Natural killer cell (primary cell): ENCODE measurements at regions of chr1 and their contacts with region 1.

Region 1: DNA sequence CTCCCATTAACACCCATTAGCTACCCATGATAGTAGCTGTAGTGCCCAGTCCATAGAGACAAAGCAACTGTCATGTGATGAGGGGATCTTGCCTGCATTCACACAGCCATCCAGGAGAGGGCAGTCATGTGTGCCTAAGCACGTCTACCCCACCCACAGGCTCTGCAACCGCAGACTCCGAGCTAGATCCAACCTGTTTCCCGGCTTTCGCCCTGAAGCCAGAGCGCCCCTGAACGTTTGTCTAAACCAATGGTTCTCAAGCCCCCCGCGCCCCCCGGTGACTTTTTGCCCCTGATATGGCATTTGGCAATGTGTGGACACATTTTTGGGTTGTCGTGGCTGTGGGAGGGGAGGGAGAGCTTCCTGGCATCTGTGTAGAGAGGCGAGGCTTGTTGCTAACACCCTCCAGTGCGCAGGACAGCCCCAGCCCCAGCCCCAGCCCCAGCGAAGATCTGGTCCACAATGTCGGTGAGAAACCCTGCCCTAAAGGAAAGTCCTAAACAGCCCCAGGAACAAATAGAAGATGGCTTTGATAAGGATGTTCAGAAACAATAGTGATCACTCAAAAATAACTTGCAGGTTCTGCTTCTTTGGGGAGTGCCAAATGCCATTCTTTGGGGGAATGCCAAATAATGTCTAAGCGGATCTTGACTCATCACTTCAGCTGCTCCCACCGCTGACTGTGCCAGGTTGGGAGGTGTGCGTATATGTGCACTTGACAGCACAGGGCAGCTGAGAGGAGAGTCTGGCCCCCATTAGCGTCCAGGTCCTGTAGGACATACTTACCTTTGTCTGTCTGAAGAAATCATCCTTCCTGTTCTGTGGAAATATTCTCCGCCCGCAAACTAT is 34.5 kb downstream of the SLC44A3 start:
- DNase-seq: peak; percentile 53 to 90
- ATAC-seq: peak; percentile 96 to 98 (median 98)
- H3K4me3 ChIP-seq: peak overlapping the region; percentile 41
- H3K4me3 Mint-ChIP-seq: no peak overlapping the region
- H3K27ac ChIP-seq: no peak overlapping the region
- H3K27ac Mint-ChIP-seq: no peak overlapping the region
- H3K4me1 ChIP-seq: peaks cover 6% of the 10 kb centered on the region
- H3K4me1 Mint-ChIP-seq: no peaks in the 10 kb centered on the region
- H3K27me3 ChIP-seq: peaks cover 2% of the 10 kb centered on the region
- H3K27me3 Mint-ChIP-seq: peaks cover 5 to 7% of the 10 kb centered on the region in 2 donors
- CTCF ChIP-seq: peak; percentile 66

Region 2: DNA sequence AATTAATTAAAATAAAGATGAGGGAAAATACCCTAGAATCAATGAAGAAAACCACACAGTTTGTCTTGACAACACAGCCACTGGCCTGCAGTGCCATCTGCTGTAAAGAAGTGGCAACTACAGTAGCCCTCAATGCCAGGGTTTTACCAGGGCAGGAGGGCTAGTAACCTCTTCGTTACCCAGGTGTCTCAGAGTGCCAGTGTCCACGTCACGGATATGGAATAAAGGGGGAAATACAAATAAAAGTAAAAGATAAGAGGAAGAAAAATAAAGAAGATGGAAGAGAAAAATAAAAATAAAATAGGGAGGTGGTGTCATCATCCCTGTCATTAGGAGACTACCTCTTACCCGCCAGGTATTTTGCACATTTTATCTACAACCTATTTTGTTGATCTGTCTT is 48.8 kb before region 1 on chr1:
- intact Hi-C with region 1: no loop called
- DNase-seq: peak in 1 of 2 donors; percentile 68
- ATAC-seq: peak; percentile 72 to 85 (median 78)
- H3K4me3 ChIP-seq: no peak overlapping the region
- H3K4me3 Mint-ChIP-seq: no peak overlapping the region
- H3K27ac ChIP-seq: no peak overlapping the region
- H3K27ac Mint-ChIP-seq: no peak overlapping the region
- H3K4me1 ChIP-seq: peaks cover 8% of the 10 kb centered on the region
- H3K4me1 Mint-ChIP-seq: peaks cover 11 to 17% of the 10 kb centered on the region in 2 donors
- H3K27me3 ChIP-seq: no peaks in the 10 kb centered on the region
- H3K27me3 Mint-ChIP-seq: peaks cover 2 to 15% of the 10 kb centered on the region in 2 donors
- CTCF ChIP-seq: peak; percentile 99

Region 3: GRCh38 chr1:94819941-94820746 is 34.5 kb before region 1 on chr1 and contains the start of gene SLC44A3:
- intact Hi-C with region 1: no loop called
- DNase-seq: peak in 1 of 2 donors; percentile 17
- ATAC-seq: peak; percentile 55 to 88 (median 70)
- H3K4me3 ChIP-seq: peak within 1 kb of the TSS; percentile 6
- H3K4me3 Mint-ChIP-seq: peak within 1 kb of the TSS; percentile 79
- H3K27ac ChIP-seq: no peak within 1 kb of the TSS
- H3K27ac Mint-ChIP-seq: no peak within 1 kb of the TSS
- H3K4me1 ChIP-seq: peaks cover 10% of the 10 kb centered on the region
- H3K4me1 Mint-ChIP-seq: peaks cover 0 to 5% of the 10 kb centered on the region in 2 donors
- H3K27me3 ChIP-seq: peaks cover 29% of the 10 kb centered on the region
- H3K27me3 Mint-ChIP-seq: peaks cover 19 to 29% of the 10 kb centered on the region in 2 donors
- CTCF ChIP-seq: no peak
- total RNA-seq, gene SLC44A3: 0.58 TPM in 1 of 3 donors, not detected in the others

Region 4: DNA sequence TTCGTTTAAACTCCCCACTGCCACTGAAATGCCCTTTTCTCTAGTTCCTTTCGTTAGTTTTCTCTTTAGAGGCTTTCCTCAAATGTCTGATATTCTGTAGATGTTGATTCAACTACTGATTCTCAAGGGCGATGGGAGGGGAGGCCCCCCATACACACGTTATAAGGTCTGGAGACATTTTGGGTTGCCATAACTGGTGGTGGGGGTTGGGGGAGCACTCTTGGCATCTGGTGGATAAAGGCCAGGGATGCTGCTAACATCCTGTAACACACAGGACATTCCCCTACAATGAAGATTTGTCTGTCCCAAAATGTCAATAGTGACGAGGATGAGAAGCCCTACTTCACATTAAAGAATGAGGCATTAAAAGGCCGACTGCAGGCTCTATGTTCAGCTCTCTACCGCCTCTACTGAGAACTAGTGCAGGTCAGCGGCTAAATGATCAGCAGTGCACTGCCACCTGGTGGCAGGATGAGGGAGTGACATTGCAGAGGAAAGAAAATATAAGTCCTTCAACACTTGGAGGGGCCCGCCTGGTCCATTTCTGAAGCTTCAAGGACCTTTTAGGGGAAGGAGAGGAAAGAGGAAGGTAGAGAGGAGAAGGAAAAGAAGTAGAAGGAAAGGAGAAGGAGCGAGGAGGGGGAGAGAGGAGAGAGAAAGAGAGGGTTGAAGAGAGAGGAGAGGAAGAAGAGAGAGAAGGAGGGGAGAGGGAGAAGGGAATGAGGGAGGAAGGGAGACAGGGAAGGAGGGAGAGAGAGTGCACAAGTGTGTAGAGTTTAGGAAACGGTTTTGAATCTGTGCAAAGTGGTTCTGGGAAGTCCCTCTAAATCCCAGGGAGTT is 188.7 kb after region 1 on chr1:
- intact Hi-C with region 1: loop called (anchors 1 kb)
- DNase-seq: peak; percentile 69 to 89
- ATAC-seq: peak; percentile 99 to 100 (median 100)
- H3K4me3 ChIP-seq: no peak overlapping the region
- H3K4me3 Mint-ChIP-seq: no peak overlapping the region
- H3K27ac ChIP-seq: no peak overlapping the region
- H3K27ac Mint-ChIP-seq: no peak overlapping the region
- H3K4me1 ChIP-seq: no peaks in the 10 kb centered on the region
- H3K4me1 Mint-ChIP-seq: no peaks in the 10 kb centered on the region
- H3K27me3 ChIP-seq: no peaks in the 10 kb centered on the region
- H3K27me3 Mint-ChIP-seq: no peaks in the 10 kb centered on the region
- CTCF ChIP-seq: peak; percentile 95